H1 (cell line): ENCODE measurements at regions of chr17 and their contacts with region 1.

Region 1: DNA sequence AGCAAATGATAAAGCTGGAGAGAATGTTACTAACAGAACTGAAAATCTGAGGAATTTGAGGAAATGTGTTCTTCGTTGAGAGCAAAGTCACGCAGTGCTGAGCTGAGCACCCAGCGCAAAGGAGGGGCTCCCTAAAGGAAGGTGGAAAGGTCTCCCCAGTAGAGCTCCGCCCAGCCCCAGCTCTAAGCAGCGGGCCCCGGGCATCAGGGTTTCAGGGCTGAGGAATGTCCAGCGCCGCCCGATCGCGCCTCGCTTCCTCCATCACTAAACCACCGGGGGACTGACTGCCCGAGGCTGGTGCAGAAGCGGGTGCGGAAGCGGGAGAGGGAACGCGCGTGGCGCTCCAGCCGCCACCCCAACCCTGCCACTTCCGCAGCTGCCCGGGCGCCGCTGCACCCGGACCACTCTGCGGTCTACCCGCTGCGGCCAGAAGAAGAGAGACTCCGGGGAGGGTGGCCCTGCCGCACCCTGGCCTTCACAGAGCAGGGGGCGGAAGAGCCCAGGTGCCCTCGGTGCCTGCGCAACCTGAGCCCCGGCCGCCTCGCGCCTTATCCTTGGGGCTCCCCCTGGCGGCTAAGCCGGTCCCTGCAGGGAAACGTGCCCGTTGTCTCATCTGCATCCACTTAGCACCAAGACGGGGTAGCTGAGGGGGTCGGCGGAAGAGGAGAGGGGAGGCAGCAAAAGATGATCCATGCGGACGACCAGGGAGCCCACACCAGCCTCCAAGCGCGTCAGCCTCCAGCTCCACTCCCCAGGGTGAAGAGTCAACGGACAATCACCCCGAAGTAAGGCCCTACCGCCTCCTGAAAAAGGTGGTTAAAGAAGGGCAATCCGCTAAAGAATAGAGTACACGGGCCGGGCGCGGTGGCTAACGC is 12.4 kb upstream of the GUCY2D start:
- DNase-seq: peak; percentile 83 to 100
- H3K4me3 ChIP-seq: peak overlapping the region; percentile 53 to 68 (median 63)
- H3K27ac ChIP-seq: no peak overlapping the region
- H3K4me1 ChIP-seq: peaks cover 0 to 2% (median 0%) of the 10 kb centered on the region in 4 experiments; a peak in 1 of 7 replicates
- H3K27me3 ChIP-seq: peaks cover 0 to 16% (median 9%) of the 10 kb centered on the region in 4 experiments; a peak in 4 of 7 replicates
- CTCF ChIP-seq: peak; percentile 93 to 97 (median 97)
- EP300 ChIP-seq: no peak
- POLR2A ChIP-seq: peak in 1 of 2 experiments; percentile 32; a peak in 1 of 3 replicates
- RAD21 ChIP-seq: peak; percentile 62 to 77

Region 2: GRCh38 chr17:7745748-7746470 is 244.1 kb before region 1 on chr17:
- CTCF ChIA-PET with region 1: interaction called, 13 read pairs
- POLR2A ChIA-PET with region 1: no interaction called
- DNase-seq: no peak
- H3K4me3 ChIP-seq: no peak overlapping the region
- H3K27ac ChIP-seq: no peak overlapping the region
- H3K4me1 ChIP-seq: no peaks in the 10 kb centered on the region
- H3K27me3 ChIP-seq: no peaks in the 10 kb centered on the region; a peak in 1 of 7 replicates
- CTCF ChIP-seq: no peak
- EP300 ChIP-seq: no peak
- POLR2A ChIP-seq: no peak
- RAD21 ChIP-seq: no peak

Region 3: DNA sequence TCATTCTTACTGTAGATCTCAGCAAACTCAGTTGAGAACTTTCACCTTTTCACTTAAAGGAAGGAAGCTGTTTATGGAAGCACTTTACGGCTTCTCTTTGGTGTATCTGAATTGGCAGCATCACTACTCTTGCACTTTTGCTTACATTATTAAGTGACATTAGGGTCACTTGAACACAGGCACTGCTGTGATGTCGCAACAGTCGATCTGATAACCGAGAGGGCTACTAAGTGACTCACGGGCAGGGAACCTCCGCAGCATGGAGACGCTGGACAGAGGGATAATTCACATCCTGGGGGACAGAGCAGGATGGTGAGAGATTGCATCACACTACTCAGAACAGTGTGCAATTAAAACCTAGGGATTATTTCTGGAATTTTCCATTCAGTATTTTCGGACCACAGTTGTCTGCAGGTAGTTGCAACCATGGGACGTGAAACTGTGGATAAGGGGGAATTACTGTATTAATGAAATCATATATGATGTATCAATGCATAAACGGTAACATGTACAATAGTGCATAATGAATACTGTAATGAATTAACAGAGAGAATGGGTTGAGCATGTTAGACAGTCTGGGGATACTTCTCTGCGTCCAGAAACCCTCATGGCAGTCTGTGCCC is 215.9 kb before region 1 on chr17:
- CTCF ChIA-PET with region 1: no interaction called
- POLR2A ChIA-PET with region 1: no interaction called
- DNase-seq: no peak
- H3K4me3 ChIP-seq: no peak overlapping the region
- H3K27ac ChIP-seq: no peak overlapping the region
- H3K4me1 ChIP-seq: no peaks in the 10 kb centered on the region
- H3K27me3 ChIP-seq: no peaks in the 10 kb centered on the region
- CTCF ChIP-seq: no peak
- EP300 ChIP-seq: no peak
- POLR2A ChIP-seq: no peak
- RAD21 ChIP-seq: no peak

Region 4: DNA sequence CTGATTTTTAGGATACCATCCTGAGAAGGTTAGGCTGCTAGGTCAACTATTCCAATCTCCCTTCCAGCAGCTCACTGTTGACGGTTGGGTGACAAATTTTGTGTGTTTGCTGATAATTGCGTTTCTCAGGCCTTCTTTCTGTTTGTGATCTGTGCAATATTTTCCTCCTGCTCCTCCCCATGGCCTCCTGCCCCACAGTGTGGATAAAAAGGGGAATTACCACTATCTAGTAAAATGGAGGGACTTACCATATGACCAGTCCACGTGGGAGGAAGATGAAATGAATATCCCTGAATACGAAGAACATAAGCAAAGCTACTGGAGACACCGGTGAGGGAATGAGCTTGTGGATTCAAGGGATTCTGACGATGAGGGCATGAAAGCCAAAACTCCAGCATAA is 92.2 kb before region 1 on chr17:
- CTCF ChIA-PET with region 1: interaction called, 10 read pairs
- POLR2A ChIA-PET with region 1: no interaction called
- DNase-seq: no peak
- H3K4me3 ChIP-seq: no peak overlapping the region
- H3K27ac ChIP-seq: no peak overlapping the region
- H3K4me1 ChIP-seq: no peaks in the 10 kb centered on the region; a peak in 1 of 7 replicates
- H3K27me3 ChIP-seq: no peaks in the 10 kb centered on the region
- CTCF ChIP-seq: peak in 1 of 3 experiments; percentile 11; a peak in 2 of 4 replicates
- EP300 ChIP-seq: no peak
- POLR2A ChIP-seq: no peak
- RAD21 ChIP-seq: peak; percentile 37 to 53

Region 5: DNA sequence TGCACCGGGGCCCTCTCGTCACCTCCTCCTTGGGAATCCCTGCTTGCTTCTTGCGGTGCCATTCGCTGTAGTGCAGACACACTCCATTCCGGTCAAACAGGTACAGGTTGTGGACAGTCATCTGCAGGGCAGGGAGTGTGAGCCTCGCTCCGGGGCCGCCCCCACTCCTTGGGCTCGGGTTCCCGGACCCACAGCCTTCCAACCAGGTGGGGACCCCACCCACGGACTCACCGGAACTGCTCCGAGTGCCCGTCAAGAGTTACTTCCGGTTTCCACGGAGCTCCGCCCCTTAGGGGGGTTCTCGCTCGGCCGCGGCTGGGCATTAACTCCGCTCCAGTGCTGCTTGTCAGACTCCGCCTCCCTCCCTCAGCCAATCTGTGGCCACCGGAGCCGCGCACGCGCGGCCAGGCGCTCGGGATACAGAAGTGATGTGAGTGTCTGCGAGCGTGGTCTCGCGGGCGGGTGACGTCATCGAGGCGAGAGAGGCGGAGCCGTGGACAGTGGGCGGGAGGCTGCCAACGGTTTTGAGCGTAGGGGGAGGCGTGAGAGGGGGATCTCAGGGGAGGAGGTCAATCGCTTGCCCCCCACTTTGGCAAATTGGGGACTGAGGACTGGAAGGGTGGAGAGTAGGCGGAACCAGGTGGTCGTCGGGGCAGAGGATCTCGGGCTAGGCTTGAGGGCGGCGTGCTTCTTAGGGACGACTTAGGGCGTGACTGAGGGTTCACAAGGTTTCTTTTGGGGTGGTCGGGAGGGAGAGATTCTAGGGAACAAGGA is 58.1 kb before region 1 on chr17 and contains the starts of genes CNTROB and TRAPPC1:
- CTCF ChIA-PET with region 1: interaction called, 33 read pairs
- POLR2A ChIA-PET with region 1: interaction called, 4 read pairs
- DNase-seq: peak; percentile 90 to 98
- H3K4me3 ChIP-seq: peak within 1 kb of the TSS; percentile 80 to 95 (median 89)
- H3K27ac ChIP-seq: peak within 1 kb of the TSS; percentile 16; the same call in 1 of the 2 replicates
- H3K4me1 ChIP-seq: peaks cover 0 to 5% (median 3%) of the 10 kb centered on the region in 4 experiments; a peak in 4 of 7 replicates
- H3K27me3 ChIP-seq: peaks cover 11 to 28% (median 25%) of the 10 kb centered on the region in 4 experiments
- CTCF ChIP-seq: peak in 1 of 3 experiments; percentile 6; a peak in 1 of 4 replicates
- EP300 ChIP-seq: no peak
- POLR2A ChIP-seq: no peak
- RAD21 ChIP-seq: no peak
- total RNA-seq, gene CNTROB: 30.0 and 31.9 TPM in 2 replicates
- total RNA-seq, gene TRAPPC1: 99.3 and 114 TPM in 2 replicates

Region 6: DNA sequence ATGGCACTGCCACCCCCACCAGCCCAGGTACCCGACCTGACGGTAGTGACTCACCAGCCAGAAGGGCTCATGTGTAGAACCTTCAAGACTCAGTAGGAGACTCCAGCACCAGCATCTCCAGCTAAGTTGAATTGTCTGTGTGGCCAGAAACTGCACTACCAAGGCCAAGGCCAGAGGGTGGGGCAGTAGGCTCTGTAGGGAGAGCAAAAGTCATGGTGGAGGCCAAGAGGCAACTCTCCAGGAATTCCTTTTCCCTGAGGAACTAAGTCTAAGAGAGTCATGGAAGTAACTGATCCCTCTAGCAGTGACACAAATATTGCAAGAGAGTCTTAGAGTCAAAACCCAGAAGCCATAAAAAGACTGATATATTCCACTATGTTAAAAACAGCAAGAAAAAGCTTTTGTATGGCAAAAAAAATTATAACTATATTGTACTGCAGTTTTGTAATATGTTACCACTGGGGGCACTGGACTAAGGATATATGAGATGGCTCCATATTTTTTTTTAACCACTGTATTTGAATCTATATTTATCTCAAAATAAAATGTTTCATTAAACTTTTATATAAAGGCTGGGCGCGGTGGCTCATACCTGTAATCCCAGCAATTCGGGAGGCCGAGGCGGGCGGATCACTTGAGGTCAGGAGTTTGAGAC is 17.8 kb before region 1 on chr17:
- CTCF ChIA-PET with region 1: interaction called, 104 read pairs
- POLR2A ChIA-PET with region 1: no interaction called
- DNase-seq: no peak
- H3K4me3 ChIP-seq: no peak overlapping the region
- H3K27ac ChIP-seq: no peak overlapping the region
- H3K4me1 ChIP-seq: no peaks in the 10 kb centered on the region
- H3K27me3 ChIP-seq: no peaks in the 10 kb centered on the region
- CTCF ChIP-seq: no peak
- EP300 ChIP-seq: no peak
- POLR2A ChIP-seq: no peak
- RAD21 ChIP-seq: no peak

Region 7: GRCh38 chr17:8041249-8041928 is 51.4 kb after region 1 on chr17:
- CTCF ChIA-PET with region 1: interaction called, 58 read pairs
- POLR2A ChIA-PET with region 1: no interaction called
- DNase-seq: no peak
- H3K4me3 ChIP-seq: no peak overlapping the region
- H3K27ac ChIP-seq: no peak overlapping the region
- H3K4me1 ChIP-seq: peaks cover 0 to 10% (median 6%) of the 10 kb centered on the region in 4 experiments; a peak in 5 of 7 replicates
- H3K27me3 ChIP-seq: peaks cover 0 to 9% (median 4%) of the 10 kb centered on the region in 4 experiments; a peak in 3 of 7 replicates
- CTCF ChIP-seq: peak in 2 of 3 experiments; percentile 59 to 72; a peak in 3 of 4 replicates
- EP300 ChIP-seq: no peak
- POLR2A ChIP-seq: no peak
- RAD21 ChIP-seq: peak; percentile 86 to 87